ENCODE measurements at regions of chr1 and their contacts with region 1.

Region 1: GRCh38 chr1:231528172-231529029 is at the start of gene TSNAX:
- DNase-seq: peak; percentile 97
- H3K4me3 Mint-ChIP-seq: peak within 1 kb of the TSS; percentile 92
- H3K27ac Mint-ChIP-seq: peak within 1 kb of the TSS; percentile 97
- H3K4me1 Mint-ChIP-seq: peaks cover 32% of the 10 kb centered on the region
- H3K27me3 Mint-ChIP-seq: no peaks in the 10 kb centered on the region
- total RNA-seq, gene TSNAX: 41.4 and 42.7 TPM in 2 replicates

Region 2: DNA sequence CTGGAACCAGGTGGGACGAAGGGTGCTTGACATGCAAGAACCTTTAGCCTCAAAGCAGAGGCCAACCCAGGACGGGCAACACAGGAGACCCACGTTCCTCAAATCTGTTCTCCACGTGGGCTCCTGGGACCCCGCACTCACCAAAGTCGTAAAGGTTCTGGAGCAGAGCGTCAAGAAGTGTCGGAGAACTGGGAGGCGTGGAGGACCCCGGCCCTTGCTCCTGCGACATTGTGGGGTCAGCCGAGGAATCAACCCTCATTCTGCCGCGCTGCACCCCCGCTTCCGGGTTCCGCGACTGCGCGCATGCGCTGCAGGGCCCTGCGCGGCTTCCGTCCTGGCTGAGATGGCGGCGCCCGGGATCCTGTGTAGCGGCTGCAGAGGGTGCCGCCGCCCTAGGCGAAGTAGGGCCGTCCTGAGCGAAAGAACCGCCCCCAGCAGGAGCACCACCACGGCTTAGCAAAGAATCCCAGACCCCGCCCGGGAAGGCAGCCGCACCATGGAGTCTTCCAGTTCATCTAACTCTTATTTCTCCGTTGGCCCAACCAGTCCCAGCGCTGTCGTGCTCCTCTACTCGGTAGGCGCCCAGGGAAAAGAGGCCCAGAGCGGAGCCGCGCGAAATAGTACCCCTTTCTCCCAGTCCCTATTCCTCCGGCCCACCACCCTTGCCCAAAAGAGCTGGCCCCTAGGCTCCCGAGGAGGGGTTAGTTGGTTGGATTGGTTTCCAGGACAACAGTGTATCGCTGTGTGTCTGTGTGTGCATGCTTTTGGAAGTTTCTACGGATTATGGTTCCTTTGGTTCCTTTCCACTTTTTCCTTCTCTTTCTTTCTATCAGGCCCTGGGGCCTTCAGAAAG is 287.3 kb before region 1 on chr1 and contains the start of gene GNPAT:
- intact Hi-C with region 1: loop called (anchors 1 kb)
- DNase-seq: peak; percentile 98
- H3K4me3 Mint-ChIP-seq: peak within 1 kb of the TSS; percentile 94
- H3K27ac Mint-ChIP-seq: peak within 1 kb of the TSS; percentile 97
- H3K4me1 Mint-ChIP-seq: peaks cover 52% of the 10 kb centered on the region
- H3K27me3 Mint-ChIP-seq: no peaks in the 10 kb centered on the region
- total RNA-seq, gene GNPAT: 45.6 and 47.5 TPM in 2 replicates

Region 3: DNA sequence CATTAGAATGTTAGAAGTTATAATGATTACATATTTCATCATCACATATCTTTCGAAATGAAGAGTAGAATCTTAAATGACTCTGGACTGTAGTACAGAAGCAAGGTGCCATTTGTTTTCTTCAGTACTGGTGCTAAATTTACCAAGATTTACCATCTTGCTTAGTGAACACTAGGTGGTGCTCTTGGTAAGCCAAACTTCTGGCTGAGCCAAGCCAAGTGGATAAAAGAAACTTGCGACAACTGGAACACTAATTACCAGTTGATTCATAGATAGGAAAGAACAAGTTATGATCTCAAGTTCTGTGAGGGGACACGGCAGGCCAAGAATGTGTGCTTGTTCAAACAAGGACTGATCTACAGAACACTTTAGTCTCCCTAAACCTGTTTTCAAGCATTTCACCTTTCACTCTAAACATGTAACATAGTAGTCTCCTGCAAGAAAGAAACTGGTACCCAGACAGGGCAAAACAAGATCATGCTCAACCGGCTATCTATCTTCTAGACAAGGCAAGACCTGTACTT is 170.5 kb before region 1 on chr1:
- intact Hi-C with region 1: loop called (anchors 5 kb)
- DNase-seq: peak; percentile 80
- H3K4me3 Mint-ChIP-seq: no peak overlapping the region
- H3K27ac Mint-ChIP-seq: no peak overlapping the region
- H3K4me1 Mint-ChIP-seq: peaks cover 12% of the 10 kb centered on the region
- H3K27me3 Mint-ChIP-seq: no peaks in the 10 kb centered on the region

Region 4: GRCh38 chr1:231421993-231422764 is 106.2 kb before region 1 on chr1 and contains the start of gene EGLN1:
- intact Hi-C with region 1: loop called (anchors 1 kb)
- DNase-seq: peak; percentile 94
- H3K4me3 Mint-ChIP-seq: peak within 1 kb of the TSS; percentile 98
- H3K27ac Mint-ChIP-seq: peak within 1 kb of the TSS; percentile 95
- H3K4me1 Mint-ChIP-seq: peaks cover 47% of the 10 kb centered on the region
- H3K27me3 Mint-ChIP-seq: peaks cover 25% of the 10 kb centered on the region
- total RNA-seq, gene EGLN1: 21.4 and 23.9 TPM in 2 replicates

Region 5: GRCh38 chr1:231512147-231512698 is 16.2 kb before region 1 on chr1:
- intact Hi-C with region 1: no loop called
- DNase-seq: no peak
- H3K4me3 Mint-ChIP-seq: no peak overlapping the region
- H3K27ac Mint-ChIP-seq: no peak overlapping the region
- H3K4me1 Mint-ChIP-seq: peaks cover 6% of the 10 kb centered on the region
- H3K27me3 Mint-ChIP-seq: peaks cover 25% of the 10 kb centered on the region

Region 6: GRCh38 chr1:231626535-231626945 is 98.1 kb after region 1 on chr1 and contains the start of gene DISC1:
- intact Hi-C with region 1: loop called (anchors 2 kb)
- DNase-seq: peak; percentile 93
- H3K4me3 Mint-ChIP-seq: peak within 1 kb of the TSS; percentile 86
- H3K27ac Mint-ChIP-seq: peak within 1 kb of the TSS; percentile 82
- H3K4me1 Mint-ChIP-seq: peaks cover 30% of the 10 kb centered on the region
- H3K27me3 Mint-ChIP-seq: peaks cover 30% of the 10 kb centered on the region
- total RNA-seq, gene DISC1: 1.6 and 3.1 TPM in 2 replicates

Measured in activated CD4-positive, alpha-beta T cell treated with anti-CD3 and anti-CD28 coated beads, Interleukin-2, amount 10 ng/mL, durations not matched to agents 24 days and 14 days (primary cell).